ENCODE measurements at regions of chr5 and their contacts with region 1.

Region 1: DNA sequence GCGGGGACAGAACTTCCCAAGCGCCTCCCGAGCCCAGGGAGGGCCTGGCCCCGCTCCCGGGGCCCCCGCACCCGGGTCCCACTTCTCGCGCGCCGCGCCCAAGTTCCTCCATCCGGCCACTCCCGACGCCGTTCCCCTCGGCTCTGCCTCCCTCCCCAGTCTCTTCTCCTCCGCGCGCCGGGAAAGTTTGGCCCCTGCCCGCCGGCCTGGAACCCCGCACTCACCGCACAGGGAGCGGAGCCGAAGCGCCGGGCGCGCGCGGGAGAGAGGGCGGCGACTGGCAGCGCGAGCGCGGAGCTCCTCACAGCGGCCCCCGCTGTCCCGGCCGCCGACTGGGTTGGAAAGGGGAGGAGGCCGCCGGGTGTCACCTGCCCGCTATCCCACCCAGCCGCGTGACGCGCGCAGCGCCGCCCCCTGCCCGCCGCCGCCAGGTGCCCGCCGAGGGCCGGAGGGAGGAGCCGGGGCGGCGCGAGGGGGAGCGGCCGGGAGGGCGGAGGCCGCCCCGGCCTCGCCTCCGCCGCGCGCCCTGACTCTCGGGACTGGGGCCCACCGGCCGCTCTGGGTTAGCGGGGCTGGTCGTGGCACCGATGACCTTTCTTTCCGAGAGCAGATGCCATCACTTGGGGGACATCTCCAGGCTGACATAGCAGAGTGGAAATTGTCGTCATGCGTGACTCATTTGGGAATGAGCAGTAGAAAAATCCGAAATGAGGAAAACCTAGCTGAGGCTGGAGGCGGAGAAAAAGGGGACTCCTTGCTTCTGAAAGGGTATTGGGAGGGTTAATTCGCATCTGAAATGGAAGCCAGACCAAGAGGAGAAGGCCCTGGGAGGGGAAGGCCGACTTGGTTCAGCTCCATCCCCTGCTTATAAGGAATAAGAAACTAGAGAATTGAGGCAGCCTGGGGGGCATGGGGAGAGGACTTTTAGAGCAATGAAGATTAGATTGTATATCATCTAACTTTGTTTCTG is at the start of gene ELOVL7:
- DNase-seq: peak; percentile 74 to 94
- H3K4me3 ChIP-seq: peak within 1 kb of the TSS; percentile 97
- H3K27ac ChIP-seq: 0 out of 2 replicates have a peak within 1 kb of the TSS, but pooled peaks have one; percentile 21
- H3K4me1 ChIP-seq: peaks cover 17% of the 10 kb centered on the region
- H3K27me3 ChIP-seq: no peaks in the 10 kb centered on the region
- CTCF ChIP-seq: no peak; the same call in 1 of the 2 replicates
- total RNA-seq, gene ELOVL7: 17.2 and 24.3 TPM in 2 replicates

Region 2: DNA sequence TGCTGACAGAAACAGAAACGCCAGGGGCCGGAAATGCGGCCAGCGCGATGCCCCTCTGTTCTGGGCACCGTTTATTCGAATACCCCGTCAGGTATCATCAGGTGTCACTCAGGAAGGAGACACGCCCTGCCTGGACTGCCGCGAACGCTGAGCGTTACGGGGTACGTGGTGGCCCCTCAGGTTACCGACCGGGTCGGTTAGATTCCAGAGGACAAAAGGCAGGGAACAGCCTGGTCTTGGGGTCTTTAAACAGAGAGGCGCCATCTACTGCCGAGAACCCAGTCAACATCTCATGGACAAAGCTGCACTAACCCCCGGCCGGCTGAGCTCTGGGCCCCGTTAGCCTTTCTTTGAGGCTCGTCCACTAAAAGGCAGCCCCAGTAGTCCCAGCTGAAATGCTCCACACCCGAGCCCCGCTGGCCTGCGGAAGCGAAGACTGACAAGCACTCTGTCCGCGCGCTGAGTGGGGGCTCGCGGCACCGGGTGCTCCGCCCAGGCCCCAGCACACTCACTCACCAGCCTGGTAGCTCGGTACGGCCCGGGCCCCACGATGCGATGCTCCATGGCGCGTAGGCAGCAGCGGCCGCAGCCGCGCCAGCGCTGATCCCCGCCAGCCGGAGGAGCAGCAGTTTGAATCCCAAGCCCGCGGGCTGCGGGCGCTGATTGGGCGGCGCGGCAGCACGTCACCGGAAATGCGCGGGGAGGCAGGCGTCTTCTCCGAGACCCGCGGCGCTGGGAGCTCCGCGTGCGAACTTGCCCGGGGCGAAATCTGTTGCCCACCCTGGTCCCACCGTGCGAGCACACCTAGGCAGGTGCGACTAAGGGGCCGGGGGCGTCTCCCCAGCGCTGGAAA is 144.5 kb before region 1 on chr5 and contains the start of gene DEPDC1B:
- CTCF ChIA-PET with region 1: interaction called, 4 read pairs
- POLR2A ChIA-PET with region 1: interaction called, 5 read pairs
- intact Hi-C with region 1: loop called (anchors 1 kb)
- DNase-seq: peak; percentile 70 to 88
- H3K4me3 ChIP-seq: peak within 1 kb of the TSS; percentile 76
- H3K27ac ChIP-seq: peak within 1 kb of the TSS; percentile 55
- H3K4me1 ChIP-seq: peaks cover 11% of the 10 kb centered on the region; the same call in 1 of the 2 replicates
- H3K27me3 ChIP-seq: no peaks in the 10 kb centered on the region
- CTCF ChIP-seq: no peak; the same call in 1 of the 2 replicates
- total RNA-seq, gene DEPDC1B: 25.6 and 29.2 TPM in 2 replicates

Region 3: GRCh38 chr5:60765019-60765709 is 79.1 kb before region 1 on chr5:
- CTCF ChIA-PET with region 1: no interaction called
- POLR2A ChIA-PET with region 1: interaction called, 11 read pairs
- intact Hi-C with region 1: no loop called
- DNase-seq: no peak
- H3K4me3 ChIP-seq: no peak overlapping the region
- H3K27ac ChIP-seq: no peak overlapping the region
- H3K4me1 ChIP-seq: no peaks in the 10 kb centered on the region
- H3K27me3 ChIP-seq: no peaks in the 10 kb centered on the region
- CTCF ChIP-seq: no peak

Region 4: GRCh38 chr5:60779466-60779865 is 64.8 kb before region 1 on chr5:
- CTCF ChIA-PET with region 1: no interaction called
- POLR2A ChIA-PET with region 1: no interaction called
- intact Hi-C with region 1: loop called (anchors 5 kb)
- DNase-seq: peak; percentile 58 to 68
- H3K4me3 ChIP-seq: no peak overlapping the region
- H3K27ac ChIP-seq: peak overlapping the region; percentile 39; the same call in 1 of the 2 replicates
- H3K4me1 ChIP-seq: 0 out of 2 replicates have a peak, but pooled peaks cover 10% of the 10 kb centered on the region
- H3K27me3 ChIP-seq: no peaks in the 10 kb centered on the region
- CTCF ChIP-seq: no peak

Measured in PC-9 (cell line).